HEK293 (cell line): ENCODE measurements at regions of chr18 and their contacts with region 1.

Region 1: DNA sequence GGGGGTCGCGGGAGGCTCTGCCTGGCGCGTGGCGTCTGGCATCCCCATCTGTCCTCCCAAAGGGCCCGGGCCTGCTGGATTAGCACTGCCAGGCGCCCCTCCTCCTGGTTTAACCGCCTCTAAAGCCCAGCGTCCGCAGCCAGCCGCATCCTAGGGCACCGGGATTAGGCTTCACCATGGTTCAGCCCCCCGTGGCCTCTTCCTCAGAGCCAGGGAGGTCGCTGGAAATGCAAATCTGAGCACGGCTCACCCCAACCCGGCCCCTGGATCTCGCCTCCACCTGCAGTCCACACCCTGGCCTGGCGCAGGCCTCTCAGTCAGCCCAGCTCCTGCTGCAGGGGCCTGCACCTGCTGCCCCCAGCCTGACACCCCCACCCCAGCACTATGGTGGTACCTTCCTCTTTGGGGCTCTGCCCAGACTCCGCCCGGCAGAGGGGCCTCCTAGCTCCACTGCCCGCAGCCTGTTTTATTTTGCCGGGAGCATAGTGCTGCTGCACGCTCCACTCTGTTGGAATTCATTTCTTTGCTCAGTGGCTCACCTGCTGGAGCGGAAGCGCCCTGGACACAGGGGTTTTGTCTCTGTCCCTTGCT is 13.2 kb downstream of the PRELID3A start:
- H3K4me3 ChIP-seq: no peak overlapping the region
- H3K27ac ChIP-seq: peak overlapping the region; percentile 64; the same call in 1 of the 2 replicates
- H3K4me1 ChIP-seq: no peaks in the 10 kb centered on the region
- CTCF ChIP-seq: peak; percentile 22; the same call in 1 of the 2 replicates

Region 2: DNA sequence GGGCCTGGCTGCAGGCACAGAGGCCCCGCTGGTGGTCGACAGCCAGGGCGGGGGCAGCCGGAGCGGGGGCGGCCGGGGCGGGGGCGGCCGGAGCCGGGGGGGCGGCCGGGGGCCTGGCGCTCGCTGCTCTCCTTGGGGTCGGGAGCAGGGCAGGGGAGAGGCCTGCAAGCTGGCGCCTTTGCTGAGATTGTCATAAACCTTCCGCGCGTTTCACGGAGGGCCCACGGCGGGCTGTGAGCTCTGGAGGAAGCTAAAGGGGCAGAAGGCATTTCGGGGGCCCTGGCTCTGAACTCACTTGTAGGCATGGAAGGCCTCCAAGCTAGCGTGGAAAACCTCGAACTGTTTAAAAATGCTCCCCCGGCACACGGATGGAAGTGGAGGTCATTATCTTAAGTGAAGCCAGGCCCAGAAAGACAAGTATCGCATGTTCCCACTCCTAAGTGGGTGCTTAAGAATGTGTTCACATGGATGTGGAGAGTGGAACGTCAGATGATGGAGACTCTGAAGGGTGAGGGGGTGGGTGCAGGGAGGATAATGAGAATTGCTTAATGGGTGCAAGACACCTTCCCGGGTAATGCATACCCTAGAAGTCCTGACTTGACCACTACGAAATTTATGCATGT is 12.6 kb before region 1 on chr18:
- CTCF ChIA-PET with region 1: interaction called, 3 read pairs
- POLR2A ChIA-PET with region 1: interaction called, 13 read pairs
- H3K4me3 ChIP-seq: peak overlapping the region; percentile 52
- H3K27ac ChIP-seq: peak overlapping the region; percentile 94
- H3K4me1 ChIP-seq: peaks cover 14% of the 10 kb centered on the region
- CTCF ChIP-seq: no peak